Mammary epithelial cell (primary cell): ENCODE measurements at regions of chr6 and their contacts with region 1.

Region 1: DNA sequence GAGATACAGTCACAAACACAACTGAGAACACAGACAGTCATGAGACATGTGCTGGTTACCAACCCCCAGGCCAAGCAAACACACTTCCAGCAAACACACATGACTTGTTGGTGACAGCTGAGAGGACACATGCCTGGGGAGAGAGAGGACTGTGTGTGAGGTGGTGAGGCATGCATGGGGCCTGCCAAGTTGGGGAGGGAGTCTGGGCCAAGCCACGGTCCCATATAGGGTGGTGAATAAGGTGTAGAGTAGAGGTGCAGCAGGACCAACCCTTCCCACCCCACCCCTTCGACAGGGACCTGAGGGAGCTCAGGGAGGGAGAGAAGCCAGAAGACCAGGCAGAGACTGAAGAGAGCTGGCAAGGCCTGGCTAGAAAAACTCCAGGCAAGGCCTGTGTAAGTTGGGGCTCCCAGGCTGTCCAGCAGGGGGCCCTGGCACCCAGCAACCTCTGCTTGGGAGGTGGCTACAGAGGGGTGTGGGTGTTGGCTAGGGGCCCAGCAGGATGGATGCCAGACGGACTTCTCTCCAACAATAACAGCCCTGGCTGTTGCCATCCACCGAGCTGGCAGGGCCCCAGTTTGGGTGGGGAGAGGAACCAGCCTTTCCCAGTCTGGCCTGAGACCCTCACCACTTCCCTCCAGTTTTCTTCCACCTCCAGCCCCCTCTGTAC is 2.0 kb upstream of the SLC29A1 start:
- DNase-seq: peak; percentile 81
- H3K4me3 ChIP-seq: no peak overlapping the region
- H3K27ac ChIP-seq: no peak overlapping the region
- H3K4me1 ChIP-seq: peaks cover 57% of the 10 kb centered on the region
- H3K27me3 ChIP-seq: no peaks in the 10 kb centered on the region
- CTCF ChIP-seq: peak; percentile 86 to 95

Region 2: GRCh38 chr6:44172731-44173500 is 48.5 kb before region 1 on chr6:
- CTCF ChIA-PET with region 1: no interaction called
- dilution Hi-C with region 1: no loop called
- in situ Hi-C with region 1: no loop called
- intact Hi-C with region 1: loop called (anchors 1 kb)
- DNase-seq: peak; percentile 69
- H3K4me3 ChIP-seq: no peak overlapping the region
- H3K27ac ChIP-seq: no peak overlapping the region
- H3K4me1 ChIP-seq: peaks cover 7% of the 10 kb centered on the region
- H3K27me3 ChIP-seq: no peaks in the 10 kb centered on the region
- CTCF ChIP-seq: peak; percentile 92 to 94

Region 3: DNA sequence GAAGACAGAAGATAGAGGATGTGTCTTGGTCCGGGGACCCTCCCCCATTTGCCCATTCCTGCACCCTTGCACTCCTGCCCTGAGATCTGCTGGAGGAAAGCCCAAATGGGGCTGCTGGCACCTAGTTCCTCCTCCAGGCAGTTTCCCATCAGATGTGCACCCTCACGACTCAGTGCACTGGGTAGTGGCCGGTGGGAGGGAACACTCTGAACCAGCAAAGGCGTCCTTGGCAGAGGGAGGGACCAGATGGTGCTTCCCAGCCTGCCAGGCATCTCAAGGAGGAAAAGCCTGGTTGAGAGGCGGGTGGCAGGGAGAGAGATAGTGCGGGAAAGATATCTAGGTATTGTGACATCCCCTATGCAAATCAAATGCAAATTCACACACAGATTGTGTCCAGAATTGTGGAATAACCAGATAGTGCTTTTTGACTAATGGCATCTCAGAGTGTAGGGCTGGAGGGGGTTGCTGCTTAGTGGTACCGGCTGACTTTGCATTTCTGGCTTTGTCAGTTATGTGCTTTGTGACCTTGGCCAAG is 68.4 kb after region 1 on chr6:
- CTCF ChIA-PET with region 1: no interaction called
- dilution Hi-C with region 1: no loop called
- in situ Hi-C with region 1: no loop called
- intact Hi-C with region 1: no loop called
- DNase-seq: no peak
- H3K4me3 ChIP-seq: no peak overlapping the region
- H3K27ac ChIP-seq: no peak overlapping the region
- H3K4me1 ChIP-seq: no peaks in the 10 kb centered on the region
- H3K27me3 ChIP-seq: no peaks in the 10 kb centered on the region
- CTCF ChIP-seq: no peak

Region 4: DNA sequence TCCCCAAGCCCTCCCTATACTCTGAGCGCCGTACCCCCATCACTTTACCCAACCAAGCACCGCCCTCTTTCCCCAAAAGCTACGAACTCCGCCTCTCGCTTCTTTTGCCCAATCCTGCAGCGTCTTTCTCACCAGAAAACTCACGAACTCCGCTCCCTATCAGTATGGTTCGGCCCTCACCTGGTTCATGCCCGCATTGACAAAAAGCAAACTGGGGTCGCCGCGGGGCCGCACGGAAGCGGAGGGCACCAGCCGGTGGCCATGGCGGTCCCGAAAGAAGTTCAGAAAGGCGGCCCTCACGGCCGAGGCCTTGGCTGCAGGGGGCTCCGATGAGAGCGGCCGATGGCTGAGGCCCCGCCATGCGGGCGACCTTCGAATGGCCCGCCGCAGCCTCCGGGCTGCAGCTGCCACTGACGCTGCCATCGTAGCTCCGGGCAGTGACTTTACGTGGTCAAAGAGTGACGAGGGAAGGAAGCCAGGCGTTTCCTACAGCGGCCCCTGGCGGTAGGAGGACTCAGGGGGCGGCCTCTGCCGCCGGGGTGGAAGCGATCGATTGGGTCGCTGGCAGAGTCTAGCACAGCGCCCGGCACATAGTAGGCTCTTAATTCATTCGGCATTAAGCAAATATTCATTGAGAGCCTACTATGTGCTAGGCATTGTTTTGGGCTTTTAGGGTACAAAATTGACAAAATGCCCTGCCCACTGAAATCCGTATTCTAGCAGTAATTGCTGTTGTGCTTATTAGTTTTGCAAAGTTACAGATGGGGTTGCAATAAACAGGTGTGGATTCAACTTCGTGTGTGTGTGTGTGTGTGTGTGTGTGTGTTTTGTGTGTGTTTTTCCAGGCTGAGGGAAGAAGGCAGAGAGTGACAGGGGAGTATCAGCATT is 91.7 kb after region 1 on chr6 and contains the start of gene AARS2:
- CTCF ChIA-PET with region 1: interaction called, 24 read pairs
- dilution Hi-C with region 1: no loop called
- in situ Hi-C with region 1: no loop called
- intact Hi-C with region 1: no loop called
- DNase-seq: peak; percentile 76
- H3K4me3 ChIP-seq: peak within 1 kb of the TSS; percentile 58 to 78 (median 75)
- H3K27ac ChIP-seq: peak within 1 kb of the TSS; percentile 50
- H3K4me1 ChIP-seq: peaks cover 26% of the 10 kb centered on the region
- H3K27me3 ChIP-seq: no peaks in the 10 kb centered on the region
- CTCF ChIP-seq: peak; percentile 90 to 99
- total RNA-seq, gene AARS2: 9.2 to 16.8 TPM

Region 5: GRCh38 chr6:44542401-44543116 is 321.1 kb after region 1 on chr6:
- CTCF ChIA-PET with region 1: no interaction called
- dilution Hi-C with region 1: no loop called
- in situ Hi-C with region 1: no loop called
- intact Hi-C with region 1: no loop called
- DNase-seq: no peak
- H3K4me3 ChIP-seq: no peak overlapping the region
- H3K27ac ChIP-seq: no peak overlapping the region
- H3K4me1 ChIP-seq: no peaks in the 10 kb centered on the region
- H3K27me3 ChIP-seq: no peaks in the 10 kb centered on the region
- CTCF ChIP-seq: no peak